ENCODE measurements at regions of chr22 and their contacts with region 1.

Region 1: DNA sequence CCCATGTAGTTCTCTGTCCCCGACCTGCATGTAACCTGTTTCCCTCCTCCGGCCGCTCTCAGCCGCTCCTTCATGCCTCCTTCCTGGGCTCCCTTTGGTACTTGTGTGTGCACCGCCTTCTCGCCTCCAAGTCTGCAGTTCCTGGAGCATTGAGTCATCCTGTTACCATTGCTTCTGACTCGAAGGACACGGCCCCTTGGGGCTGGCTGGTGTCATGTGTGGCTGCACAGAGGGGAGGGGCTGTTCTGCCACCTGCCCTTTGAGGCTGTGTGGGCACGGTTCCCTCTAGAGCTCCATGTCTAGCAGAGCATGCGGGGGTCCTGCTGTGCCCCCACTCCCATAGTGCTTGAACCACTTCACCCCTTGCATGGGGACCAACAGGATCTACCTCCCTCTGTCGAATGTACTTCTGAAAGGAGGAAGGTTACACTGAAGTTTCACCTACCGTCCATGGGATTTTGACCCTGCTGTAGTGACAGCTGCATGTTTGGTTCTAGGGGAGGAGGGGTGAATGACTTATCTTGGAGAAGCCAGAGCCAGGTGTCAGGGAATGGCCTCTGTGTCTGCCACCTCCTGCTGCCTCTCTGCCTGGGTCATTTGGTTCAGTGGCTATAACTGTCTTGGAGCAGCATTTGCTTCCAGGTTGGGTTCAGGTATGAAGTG is 39.6 kb downstream of the BCR start:
- DNase-seq: peak; percentile 57
- H3K4me3 Mint-ChIP-seq: peak overlapping the region; percentile 76
- H3K27ac Mint-ChIP-seq: peak overlapping the region; percentile 94
- H3K4me1 Mint-ChIP-seq: peaks cover 92% of the 10 kb centered on the region
- H3K27me3 Mint-ChIP-seq: no peaks in the 10 kb centered on the region

Region 2: DNA sequence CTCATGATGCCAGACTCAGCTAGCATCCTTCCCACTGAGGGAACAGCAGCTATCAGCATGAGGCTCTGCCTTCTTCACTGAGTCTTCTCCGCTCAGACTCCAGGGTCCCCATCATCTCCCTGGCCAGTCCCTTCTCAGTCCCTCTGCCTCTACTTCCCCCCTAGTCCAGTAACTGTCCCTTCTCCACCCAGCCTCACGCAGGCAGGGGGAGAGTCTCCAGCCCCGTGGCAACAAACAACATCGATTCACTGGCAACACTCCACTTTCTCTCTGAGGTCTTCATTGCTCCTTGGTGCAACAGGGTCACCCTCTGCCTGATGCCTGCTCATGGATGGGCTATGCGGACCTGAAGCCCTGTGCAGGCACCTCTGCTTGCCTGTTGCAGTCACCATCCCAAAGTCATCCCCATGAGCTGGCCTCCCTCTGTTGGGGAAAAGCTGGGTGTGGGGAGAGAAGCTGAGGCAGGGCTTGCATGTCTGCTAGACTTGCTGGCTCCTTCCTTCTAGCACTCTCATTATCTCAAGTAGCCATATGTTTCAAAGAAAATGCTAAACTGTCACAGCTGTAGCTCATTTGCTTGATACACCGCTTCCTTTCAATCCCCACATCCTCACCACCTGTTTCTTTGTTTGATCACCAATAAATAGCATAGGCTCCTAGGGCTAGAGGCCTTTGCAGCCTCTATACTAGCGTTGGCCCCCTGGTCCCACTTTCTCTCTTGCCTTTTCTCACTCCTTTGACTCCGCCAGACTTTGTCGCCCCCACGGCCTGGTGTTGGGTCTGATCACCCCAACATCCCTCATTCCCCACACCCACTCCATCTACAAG is 43.9 kb before region 1 on chr22:
- intact Hi-C with region 1: no loop called
- DNase-seq: no peak
- H3K4me3 Mint-ChIP-seq: no peak overlapping the region
- H3K27ac Mint-ChIP-seq: peak overlapping the region; percentile 50
- H3K4me1 Mint-ChIP-seq: peaks cover 30% of the 10 kb centered on the region
- H3K27me3 Mint-ChIP-seq: no peaks in the 10 kb centered on the region

Region 3: GRCh38 chr22:23240639-23241389 is 20.9 kb after region 1 on chr22:
- intact Hi-C with region 1: loop called (anchors 1 kb)
- DNase-seq: no peak
- H3K4me3 Mint-ChIP-seq: peak overlapping the region; percentile 21
- H3K27ac Mint-ChIP-seq: peak overlapping the region; percentile 91
- H3K4me1 Mint-ChIP-seq: peaks cover 75% of the 10 kb centered on the region
- H3K27me3 Mint-ChIP-seq: no peaks in the 10 kb centered on the region

Region 4: DNA sequence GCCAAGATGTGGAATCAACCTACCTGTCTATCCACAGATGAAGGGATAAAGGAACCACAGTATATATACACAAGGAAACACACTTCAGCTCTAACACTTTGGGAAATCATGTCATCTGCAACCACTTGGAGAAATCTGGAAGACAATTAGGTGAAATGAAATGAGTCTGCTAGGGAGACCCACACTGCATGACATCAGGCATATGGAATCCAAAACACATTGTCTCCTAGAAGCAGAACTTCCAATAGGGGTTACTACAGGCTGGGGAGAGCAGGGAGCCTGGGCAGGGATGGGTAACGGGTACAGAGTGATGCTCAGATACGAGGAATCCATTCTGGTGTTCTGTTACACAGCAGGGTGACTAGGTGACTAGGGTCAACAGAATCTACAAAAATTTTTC is 489.2 kb after region 1 on chr22:
- intact Hi-C with region 1: loop called (anchors 1 kb)
- DNase-seq: no peak
- H3K4me3 Mint-ChIP-seq: no peak overlapping the region
- H3K27ac Mint-ChIP-seq: peak overlapping the region; percentile 66
- H3K4me1 Mint-ChIP-seq: peaks cover 74% of the 10 kb centered on the region
- H3K27me3 Mint-ChIP-seq: no peaks in the 10 kb centered on the region